MCF 10A (cell line): ENCODE measurements at regions of chr1 and their contacts with region 1.

Region 1: GRCh38 chr1:221741711-221742554 is at the start of gene DUSP10:
- DNase-seq: peak; percentile 100
- H3K4me3 Mint-ChIP-seq: no peak within 1 kb of the TSS
- H3K27ac Mint-ChIP-seq: no peak within 1 kb of the TSS
- H3K4me1 Mint-ChIP-seq: peaks cover 25% of the 10 kb centered on the region
- H3K27me3 Mint-ChIP-seq: no peaks in the 10 kb centered on the region
- CTCF ChIP-seq: no peak
- total RNA-seq, gene DUSP10: 15.9 and 22.0 TPM in 2 replicates

Region 2: GRCh38 chr1:220873868-220874655 is 867.9 kb before region 1 on chr1:
- CTCF ChIA-PET with region 1: no interaction called
- POLR2A ChIA-PET with region 1: no interaction called
- intact Hi-C with region 1: loop called (anchors 1 kb)
- DNase-seq: peak; percentile 74
- H3K4me3 Mint-ChIP-seq: no peak overlapping the region
- H3K27ac Mint-ChIP-seq: no peak overlapping the region
- H3K4me1 Mint-ChIP-seq: no peaks in the 10 kb centered on the region
- H3K27me3 Mint-ChIP-seq: no peaks in the 10 kb centered on the region
- CTCF ChIP-seq: peak; percentile 99

Region 3: GRCh38 chr1:221612264-221612777 is 129.6 kb before region 1 on chr1:
- CTCF ChIA-PET with region 1: no interaction called
- POLR2A ChIA-PET with region 1: interaction called, 8 read pairs
- intact Hi-C with region 1: loop called (anchors 2 kb)
- DNase-seq: peak; percentile 99
- H3K4me3 Mint-ChIP-seq: no peak overlapping the region
- H3K27ac Mint-ChIP-seq: peak overlapping the region; percentile 2
- H3K4me1 Mint-ChIP-seq: peaks cover 13% of the 10 kb centered on the region
- H3K27me3 Mint-ChIP-seq: no peaks in the 10 kb centered on the region
- CTCF ChIP-seq: no peak

Region 4: DNA sequence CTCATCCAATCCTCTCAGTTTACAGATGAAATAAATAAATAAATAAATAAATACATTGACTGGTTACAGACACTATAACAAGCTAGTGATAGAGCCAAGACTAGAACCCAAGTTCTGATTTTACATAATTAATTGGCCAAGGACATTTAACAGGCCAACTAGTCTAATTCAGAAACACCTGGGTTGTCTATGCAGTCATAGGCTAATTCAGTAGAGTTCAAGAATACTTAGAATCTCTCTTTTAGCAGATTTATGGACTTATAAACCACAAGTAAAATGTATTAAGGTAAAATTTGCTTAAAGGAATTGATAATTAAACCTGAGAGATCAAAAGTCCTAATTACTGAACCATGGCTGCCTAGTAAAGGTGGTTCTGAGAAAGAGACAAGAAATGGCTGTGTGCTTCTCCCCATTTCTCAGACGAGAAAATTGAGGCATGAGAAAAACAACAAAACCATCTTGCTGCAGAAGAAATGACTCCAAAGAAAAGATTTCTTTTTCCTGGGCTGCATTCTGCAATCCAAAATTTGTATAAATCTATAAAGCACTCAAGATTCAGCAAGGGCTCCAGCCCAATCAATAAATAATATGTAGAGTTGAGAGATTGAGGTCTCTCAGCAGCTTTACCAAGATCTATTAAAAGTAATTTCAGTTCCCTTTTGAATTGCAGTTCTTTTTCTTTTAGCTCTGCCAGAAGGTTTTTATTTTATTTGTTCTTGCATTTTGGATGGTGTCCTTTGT is 98.4 kb before region 1 on chr1:
- CTCF ChIA-PET with region 1: no interaction called
- POLR2A ChIA-PET with region 1: no interaction called
- intact Hi-C with region 1: no loop called
- DNase-seq: no peak
- H3K4me3 Mint-ChIP-seq: no peak overlapping the region
- H3K27ac Mint-ChIP-seq: no peak overlapping the region
- H3K4me1 Mint-ChIP-seq: peaks cover 9% of the 10 kb centered on the region
- H3K27me3 Mint-ChIP-seq: no peaks in the 10 kb centered on the region
- CTCF ChIP-seq: no peak

Region 5: GRCh38 chr1:221759436-221759835 is 17.5 kb after region 1 on chr1:
- CTCF ChIA-PET with region 1: interaction called, 12 read pairs
- POLR2A ChIA-PET with region 1: interaction called, 50 read pairs
- intact Hi-C with region 1: no loop called
- DNase-seq: no peak
- H3K4me3 Mint-ChIP-seq: no peak overlapping the region
- H3K27ac Mint-ChIP-seq: no peak overlapping the region
- H3K4me1 Mint-ChIP-seq: peaks cover 17% of the 10 kb centered on the region
- H3K27me3 Mint-ChIP-seq: no peaks in the 10 kb centered on the region
- CTCF ChIP-seq: no peak

Region 6: DNA sequence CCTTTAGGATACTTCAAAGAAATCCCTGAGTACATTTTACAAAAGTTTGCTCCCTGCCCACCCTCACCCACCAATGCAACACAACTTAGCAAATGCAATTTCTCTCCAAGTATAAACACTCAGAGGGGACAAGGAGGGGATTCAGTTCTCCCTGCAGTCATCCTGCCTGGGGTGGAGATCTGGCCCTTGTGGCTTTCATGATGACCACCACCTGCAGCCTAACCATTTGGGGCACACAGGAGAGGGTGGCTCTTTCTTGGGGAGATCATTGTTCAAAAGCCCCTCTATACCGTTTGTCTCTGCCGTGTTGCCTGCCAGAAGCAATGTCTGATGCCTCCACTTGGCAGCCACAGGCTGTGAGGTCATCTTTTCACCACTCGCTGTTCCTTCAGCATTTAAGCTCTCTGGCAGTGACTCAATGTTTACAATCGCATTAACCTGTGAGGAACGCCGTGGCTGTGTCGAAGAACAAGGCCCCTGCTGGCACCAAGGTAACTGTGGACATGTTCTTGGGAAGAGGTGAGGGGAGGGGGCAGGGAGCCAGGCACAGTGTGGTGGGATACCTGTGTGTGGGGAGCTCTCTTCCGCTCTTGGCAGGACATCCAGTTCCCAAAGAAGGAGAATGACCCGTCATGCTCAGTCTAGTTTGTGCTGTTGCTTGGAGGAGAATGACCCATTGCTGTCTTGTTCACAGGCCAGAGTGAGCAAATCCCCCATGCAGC is 103.9 kb after region 1 on chr1:
- CTCF ChIA-PET with region 1: interaction called, 5 read pairs
- POLR2A ChIA-PET with region 1: interaction called, 64 read pairs
- intact Hi-C with region 1: no loop called
- DNase-seq: peak; percentile 97
- H3K4me3 Mint-ChIP-seq: no peak overlapping the region
- H3K27ac Mint-ChIP-seq: peak overlapping the region; percentile 78
- H3K4me1 Mint-ChIP-seq: peaks cover 28% of the 10 kb centered on the region
- H3K27me3 Mint-ChIP-seq: no peaks in the 10 kb centered on the region
- CTCF ChIP-seq: no peak

Region 7: GRCh38 chr1:222002503-222002902 is 260.6 kb after region 1 on chr1:
- CTCF ChIA-PET with region 1: interaction called, 70 read pairs
- POLR2A ChIA-PET with region 1: interaction called, 40 read pairs
- intact Hi-C with region 1: no loop called
- DNase-seq: no peak
- H3K4me3 Mint-ChIP-seq: no peak overlapping the region
- H3K27ac Mint-ChIP-seq: no peak overlapping the region
- H3K4me1 Mint-ChIP-seq: peaks cover 9% of the 10 kb centered on the region
- H3K27me3 Mint-ChIP-seq: no peaks in the 10 kb centered on the region
- CTCF ChIP-seq: no peak